Naive thymus-derived CD8-positive, alpha-beta T cell (primary cell): ENCODE measurements at regions of chr6 and their contacts with region 1.

Region 1: DNA sequence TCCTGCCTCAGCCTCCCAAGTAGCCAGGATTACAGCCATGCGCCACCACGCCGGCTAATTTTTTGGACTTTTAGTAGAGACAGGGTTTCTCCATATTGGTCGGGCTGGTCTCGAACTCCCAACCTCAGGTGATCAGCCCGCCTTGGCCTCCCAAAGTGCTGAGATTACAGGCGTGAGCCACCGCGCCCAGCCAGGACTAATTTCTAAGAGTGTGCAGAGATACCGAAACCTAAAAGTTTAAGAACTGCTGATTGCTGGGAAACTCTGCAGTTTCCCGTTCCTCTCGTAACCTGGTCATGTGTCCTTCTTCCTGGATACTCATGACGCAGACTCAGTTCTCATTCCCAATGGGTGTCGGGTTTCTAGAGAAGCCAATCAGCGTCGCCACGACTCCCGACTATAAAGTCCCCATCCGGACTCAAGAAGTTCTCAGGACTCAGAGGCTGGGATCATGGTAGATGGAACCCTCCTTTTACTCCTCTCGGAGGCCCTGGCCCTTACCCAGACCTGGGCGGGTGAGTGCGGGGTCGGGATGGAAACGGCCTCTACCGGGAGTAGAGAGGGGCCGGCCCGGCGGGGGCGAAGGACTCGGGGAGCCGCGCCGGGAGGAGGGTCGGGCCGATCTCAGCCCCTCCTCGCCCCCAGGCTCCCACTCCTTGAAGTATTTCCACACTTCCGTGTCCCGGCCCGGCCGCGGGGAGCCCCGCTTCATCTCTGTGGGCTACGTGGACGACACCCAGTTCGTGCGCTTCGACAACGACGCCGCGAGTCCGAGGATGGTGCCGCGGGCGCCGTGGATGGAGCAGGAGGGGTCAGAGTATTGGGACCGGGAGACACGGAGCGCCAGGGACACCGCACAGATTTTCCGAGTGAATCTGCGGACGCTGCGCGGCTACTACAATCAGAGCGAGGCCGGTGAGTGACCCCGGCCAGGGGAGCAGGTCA is at the start of gene HLA-E:
- DNase-seq: peak; percentile 59 to 97 (median 92)
- ATAC-seq: peak; percentile 79 to 82
- H3K4me3 Mint-ChIP-seq: peak within 1 kb of the TSS; percentile 95 to 100 (median 99)
- H3K27ac Mint-ChIP-seq: peak within 1 kb of the TSS; percentile 97 to 100 (median 98)
- H3K4me1 Mint-ChIP-seq: peaks cover 34 to 61% (median 49%) of the 10 kb centered on the region in 4 donors
- H3K27me3 Mint-ChIP-seq: no peaks in the 10 kb centered on the region
- polyA plus RNA-seq, gene HLA-E: 2,699 to 2,977 (median 2,826) TPM

Region 2: DNA sequence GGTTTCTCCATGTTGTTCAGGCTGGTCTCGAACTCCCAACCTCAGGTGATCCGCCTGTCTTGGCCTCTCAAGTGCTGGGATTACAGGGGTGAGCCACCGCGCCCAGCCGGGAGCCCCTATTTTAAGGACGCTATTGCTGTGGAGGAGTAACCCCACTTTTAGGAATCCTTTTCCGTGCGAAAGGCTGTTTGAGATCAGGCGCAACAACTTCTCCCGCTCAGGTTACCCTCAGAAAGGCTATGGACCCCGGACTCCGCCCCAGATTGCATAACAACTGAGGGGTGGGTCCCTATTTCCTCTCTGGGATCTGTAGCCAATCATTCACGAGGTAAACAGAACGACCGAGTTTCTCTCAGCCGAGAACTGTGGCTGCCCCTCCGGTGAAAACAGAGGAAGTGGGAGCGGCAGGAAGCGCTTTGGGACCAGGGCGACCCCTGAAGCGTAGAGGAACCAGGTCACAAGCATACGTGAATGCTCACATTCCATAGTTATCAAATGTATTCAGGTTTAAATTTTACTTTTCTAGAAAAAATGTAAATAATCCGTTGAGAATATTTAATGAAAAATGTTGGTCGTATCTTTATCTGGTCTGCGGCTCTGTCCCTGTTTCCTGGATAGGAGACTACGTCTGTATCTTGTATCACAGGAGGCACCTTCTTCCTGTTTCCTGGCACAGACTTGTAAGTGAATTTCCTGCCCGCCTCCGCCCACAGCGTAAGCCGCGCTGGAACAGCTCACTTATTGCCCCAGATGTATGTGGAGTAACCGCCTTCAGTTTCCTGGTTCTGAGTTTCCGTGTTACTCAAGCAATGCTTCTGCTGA is 26.8 kb after region 1 on chr6:
- POLR2A ChIA-PET with region 1: interaction called, 540 read pairs
- DNase-seq: peak; percentile 71 to 97 (median 91)
- ATAC-seq: peak; percentile 84 to 85
- H3K4me3 Mint-ChIP-seq: peak overlapping the region; percentile 70 to 94 (median 90)
- H3K27ac Mint-ChIP-seq: peak overlapping the region; percentile 96 to 100 (median 99)
- H3K4me1 Mint-ChIP-seq: peaks cover 18 to 80% (median 66%) of the 10 kb centered on the region in 4 donors
- H3K27me3 Mint-ChIP-seq: no peaks in the 10 kb centered on the region

Region 3: GRCh38 chr6:30541515-30542403 is 52.4 kb after region 1 on chr6:
- POLR2A ChIA-PET with region 1: interaction called, 211 read pairs
- DNase-seq: peak; percentile 64 to 90 (median 79)
- ATAC-seq: peak; percentile 72 to 78
- H3K4me3 Mint-ChIP-seq: peak overlapping the region; percentile 78 to 95 (median 90)
- H3K27ac Mint-ChIP-seq: peak overlapping the region; percentile 82 to 97 (median 93)
- H3K4me1 Mint-ChIP-seq: peaks cover 27 to 36% (median 32%) of the 10 kb centered on the region in 4 donors
- H3K27me3 Mint-ChIP-seq: no peaks in the 10 kb centered on the region

Region 4: DNA sequence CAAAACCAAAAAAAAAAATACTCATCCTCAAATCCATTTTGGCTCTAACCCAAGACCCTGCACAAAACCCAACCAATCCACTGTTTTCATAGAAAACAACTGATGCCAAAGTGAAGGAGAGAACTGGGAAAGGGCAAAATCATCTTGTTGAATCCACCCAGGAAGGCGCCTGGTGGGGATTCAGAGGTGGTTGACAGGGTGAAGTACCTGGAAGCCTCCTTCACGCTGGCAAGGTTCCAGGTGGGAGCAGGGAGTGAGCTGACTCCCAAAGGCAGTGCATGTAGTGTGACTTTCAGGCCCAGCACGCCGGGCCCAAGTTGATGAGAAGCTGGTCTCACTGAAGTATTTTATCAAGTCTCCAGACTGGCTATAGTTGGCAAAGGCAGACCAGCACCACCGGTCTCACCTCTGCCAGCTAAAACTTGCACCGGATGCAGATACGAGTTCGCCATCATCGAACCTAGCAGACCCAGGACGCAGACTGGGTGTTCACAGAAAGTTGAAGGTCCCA is 111.2 kb after region 1 on chr6:
- POLR2A ChIA-PET with region 1: interaction called, 22 read pairs
- DNase-seq: no peak
- ATAC-seq: no peak
- H3K4me3 Mint-ChIP-seq: no peak overlapping the region
- H3K27ac Mint-ChIP-seq: peak overlapping the region; percentile 52 to 91 (median 76)
- H3K4me1 Mint-ChIP-seq: peaks cover 20 to 40% (median 33%) of the 10 kb centered on the region in 4 donors
- H3K27me3 Mint-ChIP-seq: no peaks in the 10 kb centered on the region

Region 5: GRCh38 chr6:30717042-30717844 is 227.9 kb after region 1 on chr6 and contains the start of gene MDC1:
- POLR2A ChIA-PET with region 1: interaction called, 12 read pairs
- DNase-seq: peak; percentile 91 to 100 (median 98)
- ATAC-seq: peak; percentile 75 to 80
- H3K4me3 Mint-ChIP-seq: peak within 1 kb of the TSS; percentile 87 to 99 (median 97)
- H3K27ac Mint-ChIP-seq: peak within 1 kb of the TSS; percentile 97 to 100 (median 99)
- H3K4me1 Mint-ChIP-seq: peaks cover 34 to 59% (median 57%) of the 10 kb centered on the region in 4 donors
- H3K27me3 Mint-ChIP-seq: no peaks in the 10 kb centered on the region
- polyA plus RNA-seq, gene MDC1: 1.3 to 6.3 (median 2.8) TPM

Region 6: GRCh38 chr6:30769088-30769852 is 279.9 kb after region 1 on chr6:
- POLR2A ChIA-PET with region 1: no interaction called
- DNase-seq: peak; percentile 26 to 75 (median 52)
- ATAC-seq: peak; percentile 79 to 88
- H3K4me3 Mint-ChIP-seq: peak overlapping the region; percentile 45 to 84 (median 72)
- H3K27ac Mint-ChIP-seq: peak overlapping the region; percentile 53 to 94 (median 86)
- H3K4me1 Mint-ChIP-seq: peaks cover 37 to 75% (median 65%) of the 10 kb centered on the region in 4 donors
- H3K27me3 Mint-ChIP-seq: no peaks in the 10 kb centered on the region